ENCODE measurements at regions of chr2 and their contacts with region 1.

Region 1: GRCh38 chr2:223797811-223798721 is 39.3 kb downstream of the AP1S3 start:
- DNase-seq: no peak
- ATAC-seq: peak; percentile 54

Region 2: GRCh38 chr2:223692191-223692947 is 105.7 kb before region 1 on chr2:
- intact Hi-C with region 1: loop called (anchors 5 kb)
- DNase-seq: no peak
- ATAC-seq: peak; percentile 42

Region 3: GRCh38 chr2:223727562-223727961 is 70.5 kb before region 1 on chr2:
- intact Hi-C with region 1: loop called (anchors 5 kb)
- DNase-seq: no peak
- ATAC-seq: no peak